Activated CD4-positive, alpha-beta memory T cell treated with anti-CD3 and anti-CD28 coated beads, Interleukin-2, amount 10 ng/mL, durations not matched to agents 7 days and 5 days (primary cell): ENCODE measurements at regions of chr13 and their contacts with region 1.

Region 1: DNA sequence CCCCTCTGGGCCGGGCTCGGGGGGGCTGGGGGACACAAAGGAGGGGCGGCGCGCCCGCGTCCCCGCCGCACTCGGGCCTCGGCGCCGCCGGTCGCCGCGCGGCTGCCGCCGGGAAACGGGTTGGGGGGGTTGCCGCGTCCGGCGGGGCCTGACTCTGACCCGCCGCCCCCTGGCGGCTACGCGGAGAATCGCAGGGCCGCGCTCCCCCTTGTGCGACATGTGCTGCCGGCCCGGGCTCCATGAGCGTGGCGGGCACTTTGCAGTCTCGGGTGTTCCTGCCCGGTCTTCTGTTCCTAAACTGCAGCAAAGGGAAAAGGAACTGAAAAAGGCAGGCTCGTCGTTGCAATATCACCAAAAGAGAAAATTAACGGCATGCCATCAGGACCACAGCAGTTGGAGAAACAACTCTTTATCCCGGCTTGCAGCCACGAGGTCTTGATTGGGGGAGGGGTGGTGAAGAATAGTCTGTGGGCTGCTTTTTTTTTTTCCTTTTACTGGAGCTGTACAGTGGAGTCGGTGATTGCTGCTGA is 1.5 kb downstream of the MIR17HG start:
- DNase-seq: peak; percentile 90
- H3K4me3 Mint-ChIP-seq: peak overlapping the region; percentile 96
- H3K27ac Mint-ChIP-seq: peak overlapping the region; percentile 79
- H3K4me1 Mint-ChIP-seq: peaks cover 55% of the 10 kb centered on the region
- H3K27me3 Mint-ChIP-seq: no peaks in the 10 kb centered on the region

Region 2: GRCh38 chr13:91313103-91313502 is 35.9 kb before region 1 on chr13:
- CTCF ChIA-PET with region 1: interaction called, 15 read pairs
- POLR2A ChIA-PET with region 1: interaction called, 11 read pairs
- DNase-seq: no peak
- H3K4me3 Mint-ChIP-seq: no peak overlapping the region
- H3K27ac Mint-ChIP-seq: no peak overlapping the region
- H3K4me1 Mint-ChIP-seq: peaks cover 19% of the 10 kb centered on the region
- H3K27me3 Mint-ChIP-seq: peaks cover 19% of the 10 kb centered on the region

Region 3: GRCh38 chr13:91331047-91331915 is 17.7 kb before region 1 on chr13:
- CTCF ChIA-PET with region 1: interaction called, 8 read pairs
- POLR2A ChIA-PET with region 1: interaction called, 12 read pairs
- DNase-seq: no peak
- H3K4me3 Mint-ChIP-seq: peak overlapping the region; percentile 56
- H3K27ac Mint-ChIP-seq: peak overlapping the region; percentile 24
- H3K4me1 Mint-ChIP-seq: peaks cover 14% of the 10 kb centered on the region
- H3K27me3 Mint-ChIP-seq: peaks cover 15% of the 10 kb centered on the region

Region 4: DNA sequence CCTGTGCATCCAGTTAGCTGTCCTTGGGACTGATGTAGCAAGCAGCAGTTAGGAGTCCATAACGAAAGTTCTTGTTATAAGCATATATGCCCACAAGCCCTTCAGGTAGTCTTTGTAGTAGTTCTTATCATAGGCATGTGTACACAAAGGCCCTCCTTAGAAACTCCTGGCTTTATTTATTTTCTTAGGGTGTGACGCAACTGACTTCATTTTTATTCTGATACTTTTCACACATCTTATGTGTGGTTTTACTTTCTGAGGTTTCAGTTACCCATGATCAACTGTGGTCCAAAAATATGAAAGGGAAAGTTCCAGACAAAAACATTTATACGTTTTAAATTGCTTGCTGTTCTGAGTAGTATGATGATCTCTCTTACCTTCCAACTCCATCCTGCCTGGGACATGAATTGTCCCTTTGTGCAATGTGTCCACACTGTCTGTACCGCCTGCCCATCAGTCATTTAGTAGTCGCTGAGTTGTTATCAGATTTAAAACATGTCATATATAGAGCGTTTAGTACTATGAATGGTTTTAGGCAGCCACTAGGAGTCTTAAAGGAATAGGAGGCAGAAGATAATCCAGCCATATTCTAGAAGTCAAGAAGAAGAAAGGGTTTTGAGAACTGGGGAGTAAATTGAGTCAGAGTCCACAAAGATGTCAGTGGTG is 68.8 kb after region 1 on chr13:
- CTCF ChIA-PET with region 1: no interaction called
- POLR2A ChIA-PET with region 1: no interaction called
- DNase-seq: no peak
- H3K4me3 Mint-ChIP-seq: no peak overlapping the region
- H3K27ac Mint-ChIP-seq: no peak overlapping the region
- H3K4me1 Mint-ChIP-seq: no peaks in the 10 kb centered on the region
- H3K27me3 Mint-ChIP-seq: peaks cover 12% of the 10 kb centered on the region